Activated CD8-positive, alpha-beta memory T cell treated with anti-CD3 and anti-CD28 coated beads, Interleukin-2, amount 10 ng/mL, durations not matched to agents 7 days and 5 days (primary cell): ENCODE measurements at regions of chr12 and their contacts with region 1.

Region 1: DNA sequence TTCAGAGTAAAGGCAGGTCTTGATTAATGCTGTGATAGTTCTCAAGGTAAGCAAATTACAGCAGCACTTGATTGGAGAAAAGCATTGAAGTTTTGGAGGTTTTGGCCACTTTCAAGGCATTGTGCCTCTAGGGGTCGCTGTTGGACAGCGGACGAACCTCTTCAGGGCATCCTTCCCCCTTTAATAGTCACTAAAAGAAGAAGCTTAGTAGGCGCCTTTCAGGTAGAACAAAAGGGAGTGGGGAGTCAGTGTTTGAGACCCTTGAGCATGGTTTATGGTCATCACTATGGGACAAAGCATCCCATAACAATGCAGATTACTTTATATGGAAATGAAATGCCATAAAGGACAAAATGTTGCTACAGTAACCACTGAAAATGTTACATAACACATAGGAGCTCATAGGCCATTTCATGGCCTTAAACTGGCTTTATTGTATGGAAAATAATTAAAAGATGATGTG is 199.5 kb upstream of the DCN start:
- DNase-seq: peak; percentile 87
- ATAC-seq: peak; percentile 88
- H3K4me3 Mint-ChIP-seq: peak overlapping the region; percentile 67
- H3K27ac Mint-ChIP-seq: no peak overlapping the region
- H3K4me1 Mint-ChIP-seq: peaks cover 10% of the 10 kb centered on the region
- H3K27me3 Mint-ChIP-seq: peaks cover 17% of the 10 kb centered on the region

Region 2: GRCh38 chr12:91493308-91493707 is 111.2 kb after region 1 on chr12:
- CTCF ChIA-PET with region 1: no interaction called
- DNase-seq: no peak
- ATAC-seq: no peak
- H3K4me3 Mint-ChIP-seq: no peak overlapping the region
- H3K27ac Mint-ChIP-seq: no peak overlapping the region
- H3K4me1 Mint-ChIP-seq: no peaks in the 10 kb centered on the region
- H3K27me3 Mint-ChIP-seq: no peaks in the 10 kb centered on the region

Region 3: DNA sequence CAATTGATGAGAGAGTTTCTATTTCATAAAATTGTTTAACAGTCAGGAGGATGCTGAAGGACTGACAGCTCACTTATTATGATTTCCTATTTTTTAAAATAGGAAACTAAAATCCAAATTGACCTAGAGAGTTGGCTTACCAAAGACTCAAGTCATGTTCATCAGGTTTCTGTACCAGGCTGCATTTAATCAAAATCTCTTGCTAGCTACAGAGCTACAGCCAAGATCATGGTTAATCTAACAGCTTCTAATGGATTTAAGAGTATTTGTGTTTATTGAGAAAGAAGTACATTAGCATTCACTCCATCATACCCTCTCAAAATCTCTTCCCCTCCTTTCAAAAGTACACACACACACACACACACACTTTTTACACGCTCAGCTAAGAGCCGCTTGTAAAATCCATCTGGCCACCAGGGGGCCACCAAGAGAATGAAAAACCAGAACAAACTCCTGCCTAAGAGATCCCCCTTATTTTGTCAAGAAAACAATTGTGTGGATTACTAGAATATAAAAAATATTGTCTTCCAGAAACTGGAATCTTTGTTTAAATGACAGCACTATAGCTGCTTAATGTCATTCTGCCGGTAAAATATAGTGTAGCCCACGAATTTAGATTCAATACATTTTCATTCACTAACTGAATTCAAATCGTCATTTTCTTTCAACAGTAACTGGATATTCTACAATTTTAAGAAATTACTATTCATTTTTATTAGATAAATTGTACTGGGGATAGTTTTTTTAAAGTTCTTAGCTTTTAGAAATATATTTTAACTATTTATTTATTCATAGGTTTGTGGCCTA is 429.6 kb after region 1 on chr12:
- CTCF ChIA-PET with region 1: interaction called, 12 read pairs
- DNase-seq: peak; percentile 67
- ATAC-seq: peak; percentile 66
- H3K4me3 Mint-ChIP-seq: no peak overlapping the region
- H3K27ac Mint-ChIP-seq: no peak overlapping the region
- H3K4me1 Mint-ChIP-seq: peaks cover 5% of the 10 kb centered on the region
- H3K27me3 Mint-ChIP-seq: no peaks in the 10 kb centered on the region

Region 4: GRCh38 chr12:92570056-92570753 is 1188.1 kb after region 1 on chr12:
- CTCF ChIA-PET with region 1: interaction called, 13 read pairs
- DNase-seq: peak; percentile 50
- ATAC-seq: peak; percentile 79
- H3K4me3 Mint-ChIP-seq: no peak overlapping the region
- H3K27ac Mint-ChIP-seq: no peak overlapping the region
- H3K4me1 Mint-ChIP-seq: peaks cover 10% of the 10 kb centered on the region
- H3K27me3 Mint-ChIP-seq: no peaks in the 10 kb centered on the region

Region 5: GRCh38 chr12:92649511-92650227 is 1267.6 kb after region 1 on chr12:
- CTCF ChIA-PET with region 1: interaction called, 15 read pairs
- DNase-seq: peak; percentile 70
- ATAC-seq: peak; percentile 77
- H3K4me3 Mint-ChIP-seq: no peak overlapping the region
- H3K27ac Mint-ChIP-seq: no peak overlapping the region
- H3K4me1 Mint-ChIP-seq: peaks cover 8% of the 10 kb centered on the region
- H3K27me3 Mint-ChIP-seq: no peaks in the 10 kb centered on the region